Activated CD4-positive, alpha-beta T cell treated with anti-CD3 and anti-CD28 coated beads, Interleukin-2, amount 10 ng/mL, durations not matched to agents 7 days and 5 days (primary cell): ENCODE measurements at regions of chr3 and their contacts with region 1.

Region 1: GRCh38 chr3:119681279-119681678 is 4.1 kb upstream of the COX17 start:
- DNase-seq: peak; percentile 18
- H3K4me3 Mint-ChIP-seq: no peak overlapping the region
- H3K27ac Mint-ChIP-seq: no peak overlapping the region
- H3K4me1 Mint-ChIP-seq: peaks cover 12% of the 10 kb centered on the region
- H3K27me3 Mint-ChIP-seq: no peaks in the 10 kb centered on the region

Region 2: DNA sequence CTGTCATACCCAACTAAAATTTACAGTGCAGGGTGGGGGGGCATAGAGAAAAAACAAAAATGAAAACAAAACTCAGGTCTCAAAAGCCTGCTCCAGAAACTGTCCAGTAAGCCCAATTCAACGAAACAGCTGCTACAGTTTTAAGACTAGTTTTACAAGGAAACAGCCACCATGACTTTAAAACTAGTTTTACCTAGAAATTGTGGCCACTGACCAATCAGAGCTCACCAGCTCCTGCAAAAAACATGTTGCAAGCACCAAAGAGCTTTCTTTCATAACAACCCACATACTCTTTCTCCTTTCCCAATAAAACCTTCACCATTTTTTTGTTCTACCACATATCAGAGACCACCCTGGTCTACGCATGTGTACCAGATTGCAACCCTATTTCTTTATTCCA is 14.2 kb after region 1 on chr3:
- CTCF ChIA-PET with region 1: interaction called, 15 read pairs
- POLR2A ChIA-PET with region 1: no interaction called
- DNase-seq: no peak
- H3K4me3 Mint-ChIP-seq: no peak overlapping the region
- H3K27ac Mint-ChIP-seq: no peak overlapping the region
- H3K4me1 Mint-ChIP-seq: peaks cover 8% of the 10 kb centered on the region
- H3K27me3 Mint-ChIP-seq: no peaks in the 10 kb centered on the region